ENCODE measurements at regions of chr1 and their contacts with region 1.

Region 1: DNA sequence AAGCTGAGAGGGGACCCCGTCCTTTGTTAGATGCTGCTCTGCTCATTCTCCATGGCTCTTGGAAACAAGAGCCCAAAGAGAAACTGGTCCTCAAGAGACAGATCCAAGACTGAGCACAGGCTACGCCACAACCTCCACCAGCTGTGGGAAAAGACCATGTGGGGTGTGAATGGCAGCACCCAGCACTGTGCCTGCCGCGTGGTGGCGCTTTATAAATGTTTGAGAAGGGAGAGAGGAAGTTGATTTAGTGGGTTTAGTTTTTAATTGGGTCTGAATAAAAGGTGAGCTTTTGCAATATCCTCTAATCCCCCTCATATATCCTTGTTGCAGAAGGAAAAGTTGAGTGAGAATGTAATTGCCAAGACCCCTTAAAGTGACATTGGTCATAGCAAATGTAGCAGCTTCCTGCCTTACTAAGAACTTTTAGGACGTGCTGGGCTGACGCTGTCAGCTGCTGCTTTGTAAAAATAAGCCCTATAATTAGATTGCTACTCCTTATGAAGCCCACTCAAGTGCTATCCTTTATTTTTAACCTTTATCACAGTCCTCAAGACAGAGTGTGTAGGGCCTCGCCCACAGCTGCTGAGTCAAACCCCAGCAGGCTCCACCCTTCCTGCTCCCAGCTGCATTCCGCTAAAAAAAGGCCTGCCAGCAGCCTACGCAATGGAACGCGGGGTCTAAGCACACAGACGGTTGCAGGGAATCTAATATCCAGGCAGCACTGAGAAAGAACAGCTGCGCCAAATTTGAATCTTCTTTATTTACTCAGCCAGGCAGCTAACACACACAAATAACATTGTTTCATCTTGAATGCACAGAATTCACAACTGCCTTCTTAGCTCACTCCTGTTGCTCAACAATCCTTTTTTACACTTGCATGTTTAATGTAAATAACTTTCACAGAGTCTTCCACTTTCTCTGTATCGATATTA is 47.4 kb upstream of the PRDX6 start:
- DNase-seq: peak; percentile 46 to 67
- ATAC-seq: peak; percentile 92 to 94
- H3K4me3 ChIP-seq: no peak overlapping the region
- H3K27ac ChIP-seq: peak overlapping the region; percentile 60 to 81
- H3K4me1 ChIP-seq: peaks cover 29% of the 10 kb centered on the region
- CTCF ChIP-seq: peak; percentile 56
- EP300 ChIP-seq: no peak
- POLR2A ChIP-seq: no peak
- RAD21 ChIP-seq: peak; percentile 29 to 41; a peak in 3 of 5 replicates

Region 2: DNA sequence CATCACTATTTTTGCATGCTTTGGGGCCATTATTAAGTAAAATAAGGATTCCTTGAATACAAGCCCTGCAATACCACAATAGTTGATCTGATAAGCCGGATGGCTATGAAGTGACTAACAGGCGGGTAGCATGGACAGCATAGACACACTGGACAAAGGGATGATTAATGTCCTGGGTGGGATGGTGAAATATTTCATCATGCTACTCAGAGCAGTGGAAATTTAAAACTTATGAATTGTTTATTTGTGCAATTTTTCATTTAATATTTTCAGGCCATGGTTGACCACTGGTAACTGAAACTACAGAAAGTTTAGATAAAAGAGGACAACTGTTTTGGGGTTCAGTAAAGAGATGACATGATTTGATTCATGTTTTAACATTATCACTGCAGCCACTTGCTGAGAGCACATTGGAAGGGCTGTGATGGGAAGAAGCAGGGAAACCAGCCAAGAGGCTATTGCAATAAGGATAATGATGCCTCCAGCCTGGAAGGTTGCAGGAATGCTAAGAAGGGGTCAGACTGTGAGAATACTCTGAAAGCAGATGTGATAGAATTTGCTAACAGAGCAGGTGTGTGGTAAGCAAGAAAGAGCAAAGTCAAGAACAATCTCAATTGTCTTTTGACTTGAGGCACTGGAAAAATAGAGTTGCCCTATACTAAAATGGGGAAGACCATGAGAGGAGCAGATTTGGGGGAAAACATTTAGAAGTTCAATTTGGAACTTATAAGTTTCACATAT is 160.1 kb before region 1 on chr1:
- CTCF ChIA-PET with region 1: no interaction called
- POLR2A ChIA-PET with region 1: no interaction called
- DNase-seq: peak; percentile 40 to 79
- ATAC-seq: peak; percentile 98
- H3K4me3 ChIP-seq: no peak overlapping the region
- H3K27ac ChIP-seq: peak overlapping the region; percentile 75 to 85
- H3K4me1 ChIP-seq: peaks cover 25% of the 10 kb centered on the region
- CTCF ChIP-seq: no peak
- EP300 ChIP-seq: peak; percentile 11 to 63; a peak in 3 of 5 replicates
- POLR2A ChIP-seq: no peak
- RAD21 ChIP-seq: no peak; a peak in 1 of 5 replicates

Region 3: DNA sequence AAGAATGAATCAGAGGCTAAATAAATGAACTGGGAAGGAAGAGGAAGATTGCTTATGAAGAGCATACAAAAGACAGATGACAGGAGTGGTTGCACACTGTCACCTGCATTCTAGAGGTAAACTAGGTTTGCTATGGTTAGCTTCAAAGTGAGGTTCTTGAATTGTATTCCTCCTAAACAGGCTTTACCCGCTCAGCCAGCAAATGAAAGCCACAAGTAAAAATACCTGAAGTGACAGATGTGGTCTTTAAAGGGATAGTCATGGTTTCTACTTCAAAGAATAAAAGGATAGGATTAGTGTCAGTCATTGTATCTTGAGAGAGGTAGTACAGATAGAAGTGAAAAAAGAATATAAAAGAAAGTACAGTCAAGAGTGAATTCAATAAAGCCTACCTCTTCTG is 15.0 kb after region 1 on chr1:
- CTCF ChIA-PET with region 1: interaction called, 14 read pairs
- POLR2A ChIA-PET with region 1: no interaction called
- DNase-seq: no peak
- ATAC-seq: no peak
- H3K4me3 ChIP-seq: no peak overlapping the region
- H3K27ac ChIP-seq: no peak overlapping the region
- H3K4me1 ChIP-seq: no peaks in the 10 kb centered on the region
- CTCF ChIP-seq: no peak
- EP300 ChIP-seq: no peak
- POLR2A ChIP-seq: no peak
- RAD21 ChIP-seq: no peak

Region 4: DNA sequence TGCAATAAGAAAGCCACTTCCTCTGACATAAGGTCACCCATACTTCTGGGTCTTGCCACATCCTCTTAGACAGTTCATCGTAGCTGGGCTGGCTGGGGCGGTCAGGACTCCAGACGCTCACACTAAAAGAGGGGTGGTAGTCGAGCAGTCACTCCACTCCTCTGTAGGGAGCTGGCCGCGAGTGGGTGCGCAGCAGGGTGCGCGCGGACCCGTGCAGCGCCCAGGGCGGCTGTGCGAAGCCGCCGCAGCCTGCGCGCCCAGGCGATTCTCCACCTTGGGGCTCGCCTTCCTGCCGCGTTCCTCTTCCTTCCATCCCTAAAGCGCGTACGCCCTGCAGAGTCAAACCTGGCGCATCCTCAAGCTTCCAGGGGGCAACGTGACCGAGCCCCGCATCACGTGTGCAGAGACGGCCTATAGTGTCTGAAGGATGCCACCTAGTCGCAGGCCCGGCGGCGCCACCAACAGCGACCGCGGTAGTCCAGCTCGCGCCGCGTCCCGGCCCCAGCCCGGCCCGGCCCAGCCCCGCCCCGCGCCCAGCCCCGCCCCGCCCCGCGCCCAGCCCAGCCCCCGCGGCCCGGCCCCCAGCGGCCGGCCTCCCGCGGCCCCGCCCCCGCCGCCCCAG is 47.0 kb after region 1 on chr1:
- CTCF ChIA-PET with region 1: interaction called, 8 read pairs
- POLR2A ChIA-PET with region 1: interaction called, 12 read pairs
- DNase-seq: peak; percentile 91 to 93
- ATAC-seq: peak; percentile 92 to 93
- H3K4me3 ChIP-seq: peak overlapping the region; percentile 90
- H3K27ac ChIP-seq: peak overlapping the region; percentile 91 to 98
- H3K4me1 ChIP-seq: peaks cover 42% of the 10 kb centered on the region
- CTCF ChIP-seq: no peak
- EP300 ChIP-seq: no peak
- POLR2A ChIP-seq: peak; percentile 57
- RAD21 ChIP-seq: no peak

Region 5: DNA sequence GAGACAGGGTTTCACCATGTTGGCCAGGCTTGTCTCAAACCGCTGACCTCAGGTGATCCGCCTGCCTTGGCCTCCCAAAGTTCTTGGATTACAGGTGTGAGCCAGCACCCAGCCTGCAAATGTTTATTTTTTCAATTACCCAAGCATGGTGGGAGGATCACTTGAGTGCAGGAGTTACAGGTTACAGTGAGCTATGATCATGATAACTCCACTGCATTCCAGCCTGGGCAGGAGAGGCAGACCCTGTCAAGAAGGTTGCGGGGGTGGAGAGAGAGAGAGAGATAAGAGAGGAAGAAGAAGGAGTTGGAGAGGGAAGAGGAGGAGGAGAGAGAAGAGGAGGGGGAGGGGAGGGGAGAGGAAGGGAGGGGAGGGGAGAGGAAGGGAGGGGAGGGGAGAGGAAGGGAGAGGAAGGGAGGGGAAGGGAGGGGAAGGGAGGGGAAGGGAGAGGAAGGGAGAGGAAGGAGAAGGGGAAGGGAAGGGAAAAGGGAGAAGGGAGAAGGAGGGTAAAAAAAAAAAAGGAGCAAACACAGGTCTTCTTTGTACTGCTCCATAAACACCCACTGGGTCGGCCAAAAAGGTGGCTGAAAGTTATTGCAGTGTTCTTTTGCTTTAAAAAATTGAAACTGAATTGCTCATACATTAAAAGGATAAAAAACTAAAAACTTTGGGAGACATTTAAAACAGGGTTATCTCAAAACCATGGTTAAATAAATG is 178.9 kb after region 1 on chr1:
- CTCF ChIA-PET with region 1: no interaction called
- POLR2A ChIA-PET with region 1: no interaction called
- DNase-seq: no peak
- ATAC-seq: no peak
- H3K4me3 ChIP-seq: no peak overlapping the region
- H3K27ac ChIP-seq: no peak overlapping the region
- H3K4me1 ChIP-seq: no peaks in the 10 kb centered on the region
- CTCF ChIP-seq: no peak
- EP300 ChIP-seq: no peak
- POLR2A ChIP-seq: no peak
- RAD21 ChIP-seq: no peak

Region 6: GRCh38 chr1:173714759-173715537 is 285.2 kb after region 1 on chr1 and contains the start of gene KLHL20:
- CTCF ChIA-PET with region 1: interaction called, 12 read pairs
- POLR2A ChIA-PET with region 1: interaction called, 6 read pairs
- DNase-seq: peak; percentile 89 to 93
- ATAC-seq: peak; percentile 99
- H3K4me3 ChIP-seq: peak within 1 kb of the TSS; percentile 63
- H3K27ac ChIP-seq: peak within 1 kb of the TSS; percentile 79 to 96
- H3K4me1 ChIP-seq: peaks cover 20% of the 10 kb centered on the region; the same call in 2 of the 3 replicates
- CTCF ChIP-seq: no peak
- EP300 ChIP-seq: no peak
- POLR2A ChIP-seq: peak; percentile 90
- RAD21 ChIP-seq: 0 out of 5 replicates have a peak, but pooled peaks of 1 of the 2 experiments have one; percentile 2
- polyA plus RNA-seq, gene KLHL20: 15.8 and 16.9 TPM in 2 replicates

Region 7: DNA sequence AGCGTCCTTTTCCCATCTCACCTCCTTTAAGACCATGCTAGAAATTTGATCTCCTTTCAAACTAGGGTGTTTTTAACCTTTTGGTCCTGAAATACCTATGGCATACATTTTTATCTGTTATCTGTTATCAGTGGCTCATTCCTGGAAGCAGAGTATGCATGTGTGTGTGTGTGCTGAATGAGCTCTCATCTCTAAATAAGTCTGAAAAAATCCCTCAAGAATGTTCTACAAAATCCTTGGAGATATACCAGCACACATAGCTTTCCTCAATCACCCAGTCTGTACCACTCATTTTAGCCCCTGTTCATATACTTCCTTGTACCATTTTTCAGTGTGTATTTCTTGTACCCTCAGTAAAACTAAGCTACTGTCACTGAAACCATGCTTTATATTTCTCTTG is 388.7 kb after region 1 on chr1:
- CTCF ChIA-PET with region 1: interaction called, 25 read pairs
- POLR2A ChIA-PET with region 1: no interaction called
- DNase-seq: no peak
- ATAC-seq: no peak
- H3K4me3 ChIP-seq: no peak overlapping the region
- H3K27ac ChIP-seq: no peak overlapping the region
- H3K4me1 ChIP-seq: peaks cover 8% of the 10 kb centered on the region; the same call in 1 of the 3 replicates
- CTCF ChIP-seq: no peak
- EP300 ChIP-seq: no peak
- POLR2A ChIP-seq: no peak
- RAD21 ChIP-seq: no peak

Region 8: GRCh38 chr1:173824331-173825081 is 394.8 kb after region 1 on chr1 and contains the starts of genes CENPL and DARS2:
- CTCF ChIA-PET with region 1: interaction called, 25 read pairs
- POLR2A ChIA-PET with region 1: interaction called, 12 read pairs
- DNase-seq: peak; percentile 91 to 98
- ATAC-seq: peak; percentile 96
- H3K4me3 ChIP-seq: peak within 1 kb of the TSS; percentile 74
- H3K27ac ChIP-seq: peak within 1 kb of the TSS; percentile 90 to 92
- H3K4me1 ChIP-seq: peaks cover 16% of the 10 kb centered on the region; the same call in 1 of the 3 replicates
- CTCF ChIP-seq: no peak
- EP300 ChIP-seq: no peak
- POLR2A ChIP-seq: peak; percentile 51
- RAD21 ChIP-seq: no peak
- polyA plus RNA-seq, gene CENPL: 15.6 and 20.2 TPM in 2 replicates
- polyA plus RNA-seq, gene DARS2: 67.0 and 70.4 TPM in 2 replicates